Calu3 (cell line): ENCODE measurements at regions of chr19 and their contacts with region 1.

Region 1: DNA sequence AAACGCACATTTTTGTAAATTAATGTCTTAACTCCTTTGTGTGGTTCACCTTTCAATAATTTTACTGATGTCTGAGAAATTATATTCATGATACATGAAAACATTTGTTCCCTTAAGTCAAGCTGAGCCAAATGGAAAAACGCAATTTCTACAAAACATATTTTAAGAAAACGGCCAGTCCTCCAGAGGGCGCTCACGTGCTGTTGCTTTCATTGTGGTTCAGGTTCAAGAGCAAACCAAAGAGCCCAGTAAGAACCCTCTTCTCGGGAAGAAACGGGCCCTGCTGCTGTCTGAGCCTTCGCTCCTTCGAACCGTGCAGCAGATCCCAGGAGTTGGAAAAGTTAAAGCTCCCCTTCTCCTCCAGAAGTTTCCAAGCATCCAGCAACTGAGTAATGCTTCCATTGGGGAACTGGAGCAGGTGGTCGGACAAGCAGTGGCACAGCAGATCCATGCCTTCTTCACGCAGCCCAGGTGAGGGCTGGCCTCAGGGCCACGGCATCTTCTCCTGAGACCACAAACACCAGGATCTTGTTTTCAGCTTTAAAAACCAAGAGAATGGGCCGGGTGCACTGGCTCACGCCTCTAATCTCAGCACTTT is 4.3 kb downstream of the FAAP24 start:
- DNase-seq: peak; percentile 83
- H3K4me3 Mint-ChIP-seq: no peak overlapping the region
- H3K27ac Mint-ChIP-seq: peak overlapping the region; percentile 19
- H3K4me1 Mint-ChIP-seq: no peaks in the 10 kb centered on the region
- H3K27me3 Mint-ChIP-seq: no peaks in the 10 kb centered on the region
- CTCF ChIP-seq: peak; percentile 89

Region 2: DNA sequence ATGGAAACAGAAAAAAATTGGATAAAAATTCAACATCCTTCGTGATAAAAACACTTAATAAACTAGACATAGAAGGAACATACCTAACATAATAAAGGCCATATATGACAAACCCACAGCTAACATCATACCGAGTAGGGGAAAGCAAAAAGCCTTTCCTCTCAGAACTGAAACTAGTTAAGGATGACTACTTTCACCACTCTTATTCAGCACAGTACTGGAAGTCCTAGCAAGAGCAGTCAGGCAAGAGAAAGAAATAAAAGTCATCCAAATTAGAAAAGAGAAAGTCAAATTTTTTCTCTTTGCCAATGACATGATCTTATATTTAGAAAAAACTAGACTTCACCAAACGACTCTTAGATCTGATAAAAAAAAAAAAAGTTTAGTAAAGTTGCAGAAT is 80.9 kb before region 1 on chr19:
- CTCF ChIA-PET with region 1: no interaction called
- intact Hi-C with region 1: no loop called
- DNase-seq: no peak
- H3K4me3 Mint-ChIP-seq: no peak overlapping the region
- H3K27ac Mint-ChIP-seq: no peak overlapping the region
- H3K4me1 Mint-ChIP-seq: no peaks in the 10 kb centered on the region
- H3K27me3 Mint-ChIP-seq: no peaks in the 10 kb centered on the region
- CTCF ChIP-seq: no peak

Region 3: DNA sequence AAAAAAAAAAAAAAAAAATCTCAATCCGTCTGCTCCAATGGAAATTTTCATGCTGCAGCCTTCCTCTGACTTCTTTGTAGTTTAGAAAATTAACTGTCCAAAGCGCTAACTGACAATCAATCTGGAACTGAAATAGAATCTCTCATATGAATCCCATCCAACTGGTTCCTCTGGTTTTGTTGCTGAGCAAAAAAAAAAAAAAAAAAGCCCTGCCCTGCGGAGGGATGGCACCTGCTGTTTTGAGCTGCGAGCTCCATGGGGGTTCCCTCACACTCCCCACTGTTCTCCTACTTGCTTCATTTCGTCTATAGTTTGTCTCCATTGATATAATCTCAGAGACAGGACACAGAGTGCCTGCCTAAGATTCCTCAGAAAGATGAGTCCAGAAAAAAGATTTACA is 29.1 kb after region 1 on chr19:
- CTCF ChIA-PET with region 1: no interaction called
- intact Hi-C with region 1: no loop called
- DNase-seq: peak; percentile 32
- H3K4me3 Mint-ChIP-seq: peak overlapping the region; percentile 32
- H3K27ac Mint-ChIP-seq: peak overlapping the region; percentile 90
- H3K4me1 Mint-ChIP-seq: peaks cover 27% of the 10 kb centered on the region
- H3K27me3 Mint-ChIP-seq: no peaks in the 10 kb centered on the region
- CTCF ChIP-seq: no peak

Region 4: DNA sequence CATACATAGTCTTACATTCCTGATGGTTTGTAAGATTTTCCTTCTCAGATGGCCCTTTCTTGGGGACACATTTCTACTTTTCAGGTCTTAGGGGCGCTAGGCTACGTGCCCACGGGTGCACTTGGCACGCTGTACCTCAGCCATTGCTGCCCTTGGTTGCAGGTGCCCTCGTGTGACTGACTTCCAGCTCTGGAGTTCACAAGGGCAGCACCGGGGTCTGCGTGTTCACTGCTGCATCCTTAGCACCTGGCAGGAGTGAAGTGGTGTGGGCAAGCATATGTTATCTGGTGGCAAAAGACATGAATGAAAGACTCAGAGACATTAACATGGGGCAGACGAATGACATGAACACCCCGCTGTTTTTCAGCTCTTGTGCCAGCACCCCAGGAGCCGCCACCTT is 142.3 kb after region 1 on chr19:
- CTCF ChIA-PET with region 1: interaction called, 8 read pairs
- intact Hi-C with region 1: loop called (anchors 1 kb)
- DNase-seq: no peak
- H3K4me3 Mint-ChIP-seq: no peak overlapping the region
- H3K27ac Mint-ChIP-seq: no peak overlapping the region
- H3K4me1 Mint-ChIP-seq: peaks cover 17% of the 10 kb centered on the region
- H3K27me3 Mint-ChIP-seq: no peaks in the 10 kb centered on the region
- CTCF ChIP-seq: no peak

Region 5: GRCh38 chr19:33143897-33144405 is 167.6 kb after region 1 on chr19:
- CTCF ChIA-PET with region 1: no interaction called
- intact Hi-C with region 1: no loop called
- DNase-seq: peak; percentile 71
- H3K4me3 Mint-ChIP-seq: peak overlapping the region; percentile 4
- H3K27ac Mint-ChIP-seq: no peak overlapping the region
- H3K4me1 Mint-ChIP-seq: peaks cover 7% of the 10 kb centered on the region
- H3K27me3 Mint-ChIP-seq: peaks cover 48% of the 10 kb centered on the region
- CTCF ChIP-seq: peak; percentile 96

Region 6: GRCh38 chr19:33176670-33177416 is 200.5 kb after region 1 on chr19:
- CTCF ChIA-PET with region 1: no interaction called
- intact Hi-C with region 1: loop called (anchors 5 kb)
- DNase-seq: peak; percentile 100
- H3K4me3 Mint-ChIP-seq: peak overlapping the region; percentile 97
- H3K27ac Mint-ChIP-seq: peak overlapping the region; percentile 100
- H3K4me1 Mint-ChIP-seq: peaks cover 39% of the 10 kb centered on the region
- H3K27me3 Mint-ChIP-seq: peaks cover 15% of the 10 kb centered on the region
- CTCF ChIP-seq: peak; percentile 26